MCF 10A (cell line): ENCODE measurements at regions of chr2 and their contacts with region 1.

Region 1: DNA sequence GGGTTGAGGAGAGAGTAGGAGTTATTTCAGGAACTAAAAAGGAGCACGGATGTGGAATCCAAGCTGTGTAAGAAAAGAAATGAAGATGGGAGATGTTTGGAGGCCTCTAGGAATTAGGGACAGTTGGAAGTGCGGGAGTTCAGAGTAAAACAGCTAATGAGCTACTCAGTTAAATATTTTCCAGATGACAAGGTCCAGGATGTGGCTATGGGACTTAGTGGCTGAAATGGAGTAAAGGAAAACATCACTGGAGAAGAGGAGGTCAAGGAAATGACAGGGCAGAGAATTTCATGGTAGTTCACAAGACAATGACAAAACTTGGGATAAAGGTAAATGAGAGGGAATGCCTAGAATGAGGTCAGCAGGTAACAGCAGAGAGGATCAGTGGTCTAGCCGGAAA is 13.0 kb downstream of the GPR155 start:
- DNase-seq: no peak
- H3K4me3 Mint-ChIP-seq: no peak overlapping the region
- H3K27ac Mint-ChIP-seq: no peak overlapping the region
- H3K4me1 Mint-ChIP-seq: no peaks in the 10 kb centered on the region
- H3K27me3 Mint-ChIP-seq: no peaks in the 10 kb centered on the region
- CTCF ChIP-seq: no peak

Region 2: GRCh38 chr2:173834141-173834540 is 639.7 kb before region 1 on chr2:
- CTCF ChIA-PET with region 1: no interaction called
- POLR2A ChIA-PET with region 1: no interaction called
- intact Hi-C with region 1: no loop called
- DNase-seq: no peak
- H3K4me3 Mint-ChIP-seq: no peak overlapping the region
- H3K27ac Mint-ChIP-seq: no peak overlapping the region
- H3K4me1 Mint-ChIP-seq: peaks cover 6% of the 10 kb centered on the region
- H3K27me3 Mint-ChIP-seq: peaks cover 9% of the 10 kb centered on the region
- CTCF ChIP-seq: no peak

Region 3: DNA sequence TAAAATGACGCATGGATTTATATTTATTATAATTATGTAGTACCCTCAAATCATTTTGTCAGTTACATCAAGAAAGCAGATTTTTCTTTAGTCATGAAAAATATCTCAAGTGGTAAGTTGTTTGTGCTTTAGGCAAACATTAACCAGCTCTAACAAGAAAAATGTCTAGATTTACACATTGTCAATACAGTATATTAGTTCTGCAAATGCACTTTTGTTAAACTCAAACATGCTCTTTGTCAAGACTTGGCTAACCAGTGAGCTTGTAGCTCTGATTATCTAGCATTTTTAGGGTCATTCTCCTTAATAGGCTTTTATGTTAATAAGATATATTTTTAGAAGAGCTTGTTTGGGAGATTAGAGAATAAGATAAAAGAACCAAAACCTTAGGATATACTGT is 45.6 kb before region 1 on chr2:
- CTCF ChIA-PET with region 1: no interaction called
- POLR2A ChIA-PET with region 1: no interaction called
- intact Hi-C with region 1: no loop called
- DNase-seq: no peak
- H3K4me3 Mint-ChIP-seq: no peak overlapping the region
- H3K27ac Mint-ChIP-seq: no peak overlapping the region
- H3K4me1 Mint-ChIP-seq: no peaks in the 10 kb centered on the region
- H3K27me3 Mint-ChIP-seq: no peaks in the 10 kb centered on the region
- CTCF ChIP-seq: no peak

Region 4: GRCh38 chr2:174487108-174487819 is 13.5 kb after region 1 on chr2:
- CTCF ChIA-PET with region 1: interaction called, 5 read pairs
- POLR2A ChIA-PET with region 1: interaction called, 13 read pairs
- intact Hi-C with region 1: no loop called
- DNase-seq: peak; percentile 98
- H3K4me3 Mint-ChIP-seq: peak overlapping the region; percentile 82
- H3K27ac Mint-ChIP-seq: peak overlapping the region; percentile 97
- H3K4me1 Mint-ChIP-seq: peaks cover 8% of the 10 kb centered on the region
- H3K27me3 Mint-ChIP-seq: no peaks in the 10 kb centered on the region
- CTCF ChIP-seq: no peak

Region 5: GRCh38 chr2:176187899-176188773 is 1714.3 kb after region 1 on chr2 and contains the start of gene HOXD1:
- CTCF ChIA-PET with region 1: no interaction called
- POLR2A ChIA-PET with region 1: no interaction called
- intact Hi-C with region 1: no loop called
- DNase-seq: no peak
- H3K4me3 Mint-ChIP-seq: peak within 1 kb of the TSS; percentile 41
- H3K27ac Mint-ChIP-seq: no peak within 1 kb of the TSS
- H3K4me1 Mint-ChIP-seq: no peaks in the 10 kb centered on the region
- H3K27me3 Mint-ChIP-seq: no peaks in the 10 kb centered on the region
- CTCF ChIP-seq: no peak
- total RNA-seq, gene HOXD1: not detected in 2 replicates